ENCODE measurements at regions of chr4 and their contacts with region 1.

Region 1: GRCh38 chr4:138680989-138681604 is 334.5 kb upstream of the NOCT start:
- DNase-seq: peak; percentile 95
- H3K4me3 ChIP-seq: no peak overlapping the region
- H3K27ac ChIP-seq: no peak overlapping the region
- H3K4me1 ChIP-seq: peaks cover 0 to 9% (median 8%) of the 10 kb centered on the region in 4 donors
- H3K27me3 ChIP-seq: no peaks in the 10 kb centered on the region
- CTCF ChIP-seq: peak; percentile 90 to 96 (median 94)
- EP300 ChIP-seq: no peak
- POLR2A ChIP-seq: no peak

Region 2: DNA sequence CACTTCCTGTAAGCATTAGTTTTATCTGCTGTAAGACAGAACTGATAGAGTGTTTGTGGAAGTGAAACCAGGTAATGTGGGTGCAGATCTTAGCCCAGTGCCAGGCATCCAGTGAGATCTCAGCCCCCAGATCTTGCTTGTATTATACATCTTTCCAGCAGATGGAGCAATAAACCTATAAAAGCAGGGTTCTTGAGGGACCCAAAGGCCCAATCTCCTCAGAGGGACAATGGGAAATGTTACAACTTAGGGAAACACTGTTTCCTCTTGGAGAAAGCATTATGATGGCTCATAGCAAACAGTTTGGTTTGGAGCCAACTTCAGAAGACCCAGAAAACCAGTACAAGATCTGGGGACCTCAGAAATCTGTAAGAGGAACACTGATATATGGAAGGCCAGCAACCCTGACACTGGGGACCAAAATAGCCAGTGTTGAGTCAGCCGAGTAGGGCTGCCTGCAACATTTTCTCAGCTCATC is 645.3 kb before region 1 on chr4:
- intact Hi-C with region 1: loop called (anchors 2 kb)
- DNase-seq: no peak
- H3K4me3 ChIP-seq: no peak overlapping the region
- H3K27ac ChIP-seq: no peak overlapping the region
- H3K4me1 ChIP-seq: peaks cover 0 to 3% (median 0%) of the 10 kb centered on the region in 4 donors
- H3K27me3 ChIP-seq: no peaks in the 10 kb centered on the region
- CTCF ChIP-seq: peak; percentile 56 to 62 (median 58)
- EP300 ChIP-seq: no peak
- POLR2A ChIP-seq: no peak

Region 3: GRCh38 chr4:138090150-138090917 is 590.8 kb before region 1 on chr4:
- intact Hi-C with region 1: loop called (anchors 5 kb)
- DNase-seq: no peak
- H3K4me3 ChIP-seq: peak overlapping the region; percentile 29 to 47 (median 34)
- H3K27ac ChIP-seq: no peak overlapping the region
- H3K4me1 ChIP-seq: peaks cover 7 to 29% (median 16%) of the 10 kb centered on the region in 4 donors
- H3K27me3 ChIP-seq: no peaks in the 10 kb centered on the region
- CTCF ChIP-seq: peak; percentile 69 to 86 (median 84)
- EP300 ChIP-seq: no peak
- POLR2A ChIP-seq: no peak

Region 4: DNA sequence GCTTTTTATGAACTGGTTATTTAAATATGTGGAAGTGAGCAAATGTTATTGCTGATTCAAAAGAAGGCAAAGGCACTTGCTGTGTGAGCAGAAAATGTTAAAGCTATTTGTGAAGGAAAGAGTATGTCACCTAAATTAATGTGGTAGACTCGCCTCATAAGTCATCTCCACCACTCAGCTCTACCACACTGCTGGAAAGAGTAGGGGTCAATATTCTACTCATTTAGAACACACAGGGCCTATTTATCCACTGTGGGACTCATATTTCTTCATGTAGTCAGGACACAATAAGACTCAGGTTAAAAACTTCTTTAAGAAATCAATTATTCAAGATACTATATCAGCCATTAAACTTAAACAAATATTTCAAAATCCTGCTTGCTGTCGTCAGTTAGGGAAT is 545.5 kb before region 1 on chr4:
- intact Hi-C with region 1: no loop called
- DNase-seq: no peak
- H3K4me3 ChIP-seq: no peak overlapping the region
- H3K27ac ChIP-seq: no peak overlapping the region
- H3K4me1 ChIP-seq: no peaks in the 10 kb centered on the region
- H3K27me3 ChIP-seq: no peaks in the 10 kb centered on the region
- CTCF ChIP-seq: no peak
- EP300 ChIP-seq: no peak
- POLR2A ChIP-seq: no peak

Region 5: DNA sequence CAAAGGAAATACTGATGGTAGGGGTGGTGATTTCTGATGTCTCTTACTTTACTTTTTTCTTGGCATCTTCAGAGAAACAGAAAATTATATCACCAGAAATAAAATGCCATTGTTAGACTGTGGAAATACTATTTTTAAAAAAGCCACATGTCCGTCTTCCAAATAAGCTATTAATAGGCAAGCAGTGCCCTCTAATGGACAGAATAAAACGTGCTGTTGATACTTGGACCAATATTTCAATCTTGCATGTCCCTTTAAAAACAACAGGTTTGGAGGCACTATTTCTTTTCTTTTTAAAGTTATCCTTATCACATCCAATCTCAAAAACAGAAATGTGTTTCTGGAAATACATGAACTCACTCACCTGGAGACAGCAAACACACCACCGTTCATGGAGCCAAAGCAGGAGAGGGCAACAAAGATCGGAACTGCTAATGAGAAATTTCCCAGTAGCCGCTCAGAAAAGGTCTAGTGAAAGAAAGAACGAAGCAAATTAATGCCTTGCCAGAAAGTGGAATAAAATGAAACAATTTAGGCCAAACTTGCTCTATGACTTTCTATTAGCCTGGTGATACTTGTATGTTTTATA is 498.2 kb before region 1 on chr4:
- intact Hi-C with region 1: loop called (anchors 10 kb)
- DNase-seq: no peak
- H3K4me3 ChIP-seq: no peak overlapping the region
- H3K27ac ChIP-seq: no peak overlapping the region
- H3K4me1 ChIP-seq: peaks cover 14 to 25% (median 19%) of the 10 kb centered on the region in 4 donors
- H3K27me3 ChIP-seq: no peaks in the 10 kb centered on the region
- CTCF ChIP-seq: peak; percentile 60 to 68 (median 67)
- EP300 ChIP-seq: no peak
- POLR2A ChIP-seq: no peak

Region 6: DNA sequence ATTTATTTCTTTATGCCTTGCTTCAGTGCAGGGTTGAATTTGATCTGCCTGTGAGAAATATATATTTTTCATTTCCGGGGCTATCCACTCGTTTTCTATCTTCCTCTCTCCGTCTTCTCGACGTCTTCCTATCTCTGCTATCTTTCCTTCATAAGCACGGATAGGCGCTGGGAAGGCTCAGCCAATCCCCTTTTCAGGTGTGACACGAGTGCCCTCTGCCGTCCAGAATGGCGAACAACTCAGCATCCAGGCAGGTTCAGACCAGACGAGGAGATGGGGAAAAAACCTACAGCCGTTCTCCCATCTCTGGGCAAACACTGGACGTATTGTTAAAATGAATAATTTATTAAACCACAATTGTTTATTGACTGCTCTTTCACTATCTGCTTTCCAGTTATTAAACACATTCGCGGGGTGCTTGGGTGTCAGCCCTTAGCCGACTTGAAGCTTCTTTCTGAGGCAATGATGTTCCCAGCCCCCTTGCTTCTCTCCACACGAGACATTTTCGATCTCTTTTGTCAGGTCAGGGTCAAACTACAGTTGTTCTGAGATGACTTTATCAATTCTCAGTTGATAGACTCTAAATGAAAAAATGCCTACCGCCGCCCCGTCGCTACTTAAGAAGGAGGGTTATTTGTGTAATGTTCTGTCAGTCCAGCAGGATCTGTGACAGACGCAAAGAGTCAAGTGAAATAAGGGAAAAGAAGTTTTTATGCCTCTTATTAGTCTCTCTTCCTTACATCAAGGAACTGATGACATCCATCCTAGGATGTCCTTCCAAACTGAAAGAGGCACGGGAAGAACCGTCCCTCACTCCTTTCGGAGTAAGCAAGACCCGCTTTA is 238.2 kb after region 1 on chr4:
- intact Hi-C with region 1: loop called (anchors 5 kb)
- DNase-seq: peak; percentile 12
- H3K4me3 ChIP-seq: no peak overlapping the region
- H3K27ac ChIP-seq: no peak overlapping the region
- H3K4me1 ChIP-seq: peaks cover 0 to 9% (median 4%) of the 10 kb centered on the region in 4 donors
- H3K27me3 ChIP-seq: no peaks in the 10 kb centered on the region
- CTCF ChIP-seq: peak; percentile 56 to 82 (median 74)
- EP300 ChIP-seq: no peak
- POLR2A ChIP-seq: no peak